AG04449 (cell line): ENCODE measurements at regions of chr13 and their contacts with region 1.

Region 1: GRCh38 chr13:32211813-32212212 is 103.3 kb downstream of the ZAR1L start:
- DNase-seq: peak; percentile 92
- H3K4me3 ChIP-seq: no peak overlapping the region
- CTCF ChIP-seq: no peak

Region 2: GRCh38 chr13:32010136-32010535 is 201.7 kb before region 1 on chr13:
- CTCF ChIA-PET with region 1: no interaction called
- POLR2A ChIA-PET with region 1: no interaction called
- DNase-seq: no peak
- H3K4me3 ChIP-seq: no peak overlapping the region
- CTCF ChIP-seq: no peak

Region 3: GRCh38 chr13:32191452-32191998 is 20.3 kb before region 1 on chr13:
- CTCF ChIA-PET with region 1: no interaction called
- POLR2A ChIA-PET with region 1: no interaction called
- DNase-seq: no peak
- H3K4me3 ChIP-seq: no peak overlapping the region
- CTCF ChIP-seq: no peak

Region 4: DNA sequence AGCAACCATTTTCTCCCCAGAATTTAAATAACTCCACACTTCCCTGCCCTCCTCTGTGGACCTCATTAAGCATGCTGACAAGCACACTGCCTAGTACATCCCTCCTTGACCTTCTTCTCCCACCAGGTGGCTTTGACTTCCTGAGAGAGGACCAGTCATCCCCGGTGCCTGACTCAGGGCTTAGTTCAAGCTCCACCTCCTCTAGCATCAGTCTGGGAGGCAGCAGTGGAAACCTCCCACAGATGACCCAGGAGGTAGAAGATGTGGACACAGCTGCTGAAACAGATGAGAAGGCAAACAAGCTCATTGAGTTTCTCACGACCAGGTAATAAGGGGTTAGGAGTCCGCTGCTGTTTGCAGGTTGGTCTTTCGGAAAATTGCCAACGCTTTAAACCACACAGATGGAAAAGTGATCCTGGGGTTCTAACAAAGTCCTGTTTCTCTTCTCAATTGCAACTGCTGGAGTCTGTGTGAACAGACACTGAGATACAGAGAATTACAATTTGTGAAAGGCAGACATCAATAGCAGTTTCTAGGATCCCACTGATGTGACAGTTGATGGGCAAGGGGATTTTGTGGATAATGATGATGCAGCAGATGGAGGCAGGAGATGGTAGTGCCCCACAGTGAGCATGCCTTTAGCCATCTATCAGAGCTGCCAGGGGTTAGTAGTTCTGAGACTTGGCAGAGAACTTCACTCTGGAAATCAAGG is 16.7 kb after region 1 on chr13:
- CTCF ChIA-PET with region 1: interaction called, 5 read pairs
- POLR2A ChIA-PET with region 1: interaction called, 13 read pairs
- DNase-seq: no peak
- H3K4me3 ChIP-seq: no peak overlapping the region
- CTCF ChIP-seq: no peak